ENCODE measurements at regions of chr12 and their contacts with region 1.

Region 1: DNA sequence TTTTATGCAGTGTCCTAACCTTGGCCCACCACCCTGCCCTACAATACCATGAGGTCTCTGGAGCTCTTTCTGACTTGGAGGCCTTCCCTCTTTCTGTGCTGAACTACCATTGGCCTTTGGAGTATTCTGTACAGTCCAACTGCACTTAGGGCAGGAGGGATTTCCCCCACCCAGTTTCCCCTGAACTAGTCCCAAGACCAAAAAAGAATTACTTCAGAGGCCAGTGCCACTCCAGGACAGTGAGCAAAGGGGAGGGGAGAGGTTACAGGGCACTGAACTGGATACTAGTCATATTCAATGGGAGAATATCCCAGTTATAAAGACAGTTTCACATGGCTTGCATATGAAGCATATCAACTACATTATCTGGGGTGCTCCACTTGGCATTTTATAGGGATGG is 6.1 kb downstream of the SLCO1A2 start:
- DNase-seq: no peak
- H3K4me3 ChIP-seq: no peak overlapping the region
- H3K27ac ChIP-seq: no peak overlapping the region
- H3K4me1 ChIP-seq: no peaks in the 10 kb centered on the region
- H3K27me3 ChIP-seq: no peaks in the 10 kb centered on the region
- CTCF ChIP-seq: no peak
- POLR2A ChIP-seq: no peak

Region 2: GRCh38 chr12:21459474-21459873 is 130.9 kb after region 1 on chr12:
- intact Hi-C with region 1: no loop called
- DNase-seq: no peak
- H3K4me3 ChIP-seq: no peak overlapping the region
- H3K27ac ChIP-seq: no peak overlapping the region
- H3K4me1 ChIP-seq: no peaks in the 10 kb centered on the region
- H3K27me3 ChIP-seq: no peaks in the 10 kb centered on the region
- CTCF ChIP-seq: no peak
- POLR2A ChIP-seq: no peak

Region 3: GRCh38 chr12:21539797-21540196 is 211.2 kb after region 1 on chr12:
- intact Hi-C with region 1: loop called in 1 of 2 experiments (anchors 5 kb)
- DNase-seq: no peak
- H3K4me3 ChIP-seq: no peak overlapping the region
- H3K27ac ChIP-seq: no peak overlapping the region
- H3K4me1 ChIP-seq: no peaks in the 10 kb centered on the region
- H3K27me3 ChIP-seq: no peaks in the 10 kb centered on the region
- CTCF ChIP-seq: no peak
- POLR2A ChIP-seq: no peak

Region 4: DNA sequence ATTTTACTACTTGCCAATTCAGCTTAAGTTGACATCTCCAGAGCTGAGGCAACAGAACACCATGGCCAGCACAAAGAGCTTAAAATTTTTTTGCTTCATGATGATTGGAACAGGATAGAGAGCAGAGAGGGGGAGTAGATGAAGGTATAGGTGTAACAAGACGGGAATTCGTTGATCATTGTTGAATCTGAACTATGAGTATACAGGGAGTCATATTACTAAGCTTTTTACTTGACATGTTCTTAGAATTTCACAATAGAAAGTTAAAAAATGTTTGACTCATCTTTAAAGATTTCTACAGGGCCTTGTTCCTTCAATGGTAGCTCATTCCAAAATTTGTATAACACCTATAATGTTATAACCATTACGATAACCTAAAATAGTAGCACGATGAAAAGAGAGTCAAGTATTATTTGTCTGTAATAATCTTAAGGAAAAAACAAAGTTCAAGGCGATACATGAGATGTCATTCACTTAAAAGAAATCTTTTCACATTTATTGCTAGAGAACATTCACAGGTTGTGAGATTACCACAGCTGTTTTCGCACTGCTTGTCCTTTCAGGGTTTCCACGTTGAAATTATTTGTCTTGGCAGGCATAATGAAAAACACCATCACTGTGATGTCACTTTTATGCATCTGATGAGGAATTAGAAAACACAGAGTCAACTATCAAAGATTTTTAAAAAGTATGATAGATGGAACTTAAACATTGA is 231.4 kb after region 1 on chr12:
- intact Hi-C with region 1: no loop called
- DNase-seq: no peak
- H3K4me3 ChIP-seq: no peak overlapping the region
- H3K27ac ChIP-seq: no peak overlapping the region
- H3K4me1 ChIP-seq: no peaks in the 10 kb centered on the region
- H3K27me3 ChIP-seq: no peaks in the 10 kb centered on the region
- CTCF ChIP-seq: no peak
- POLR2A ChIP-seq: no peak

Measured in adrenal gland (tissue), 19 donors.